PC-3 (cell line): ENCODE measurements at regions of chr1 and their contacts with region 1.

Region 1: DNA sequence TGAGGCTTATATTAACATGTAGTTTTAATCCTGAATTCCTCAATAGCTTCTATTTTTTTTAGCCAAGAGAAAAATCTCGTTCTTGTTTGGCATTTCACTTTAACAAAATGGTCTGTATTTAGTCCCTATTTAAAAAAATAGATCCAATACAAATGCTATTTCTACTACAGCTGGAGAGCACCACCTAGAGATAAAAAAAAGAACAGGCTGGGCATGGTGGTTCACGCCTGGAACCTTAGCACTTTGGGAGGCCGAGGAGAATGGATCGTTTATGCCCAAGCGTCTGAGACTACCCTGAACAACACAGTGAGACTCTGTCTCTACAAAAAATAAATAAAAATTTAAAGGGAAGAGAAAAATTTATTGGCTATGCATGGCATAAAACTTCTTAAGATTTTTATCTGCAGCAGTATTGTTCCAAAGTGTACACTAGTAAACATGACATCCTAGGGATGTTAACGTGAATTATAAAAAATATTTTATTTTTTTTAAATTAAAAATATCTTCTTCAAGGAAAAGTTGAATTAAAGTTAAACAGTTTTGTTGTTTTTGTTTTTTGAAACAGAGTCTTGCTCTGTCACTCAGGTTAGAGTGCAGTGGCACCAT is 4.4 kb downstream of the ST7L start:
- DNase-seq: peak; percentile 63
- ATAC-seq: 0 out of 2 replicates have a peak, but pooled peaks have one; percentile 14
- H3K4me3 ChIP-seq: no peak overlapping the region
- H3K27ac ChIP-seq: no peak overlapping the region
- H3K4me1 ChIP-seq: peaks cover 15% of the 10 kb centered on the region; the same call in 1 of the 2 replicates
- H3K27me3 ChIP-seq: no peaks in the 10 kb centered on the region
- CTCF ChIP-seq: peak; percentile 76

Region 2: GRCh38 chr1:112298558-112298957 is 316.0 kb before region 1 on chr1:
- CTCF ChIA-PET with region 1: no interaction called
- POLR2A ChIA-PET with region 1: no interaction called
- intact Hi-C with region 1: no loop called
- DNase-seq: peak; percentile 73
- ATAC-seq: peak; percentile 77
- H3K4me3 ChIP-seq: no peak overlapping the region
- H3K27ac ChIP-seq: no peak overlapping the region
- H3K4me1 ChIP-seq: no peaks in the 10 kb centered on the region
- H3K27me3 ChIP-seq: peaks cover 43% of the 10 kb centered on the region
- CTCF ChIP-seq: peak; percentile 81

Region 3: GRCh38 chr1:112395821-112396652 is 218.5 kb before region 1 on chr1 and contains the start of gene CTTNBP2NL:
- CTCF ChIA-PET with region 1: interaction called, 5 read pairs
- POLR2A ChIA-PET with region 1: interaction called, 22 read pairs
- intact Hi-C with region 1: loop called (anchors 1 kb)
- DNase-seq: peak; percentile 96
- ATAC-seq: peak; percentile 83
- H3K4me3 ChIP-seq: peak within 1 kb of the TSS; percentile 92
- H3K27ac ChIP-seq: peak within 1 kb of the TSS; percentile 98
- H3K4me1 ChIP-seq: peaks cover 44% of the 10 kb centered on the region
- H3K27me3 ChIP-seq: no peaks in the 10 kb centered on the region
- CTCF ChIP-seq: no peak
- total RNA-seq, gene CTTNBP2NL: 3.7 and 9.8 TPM in 2 replicates

Region 4: DNA sequence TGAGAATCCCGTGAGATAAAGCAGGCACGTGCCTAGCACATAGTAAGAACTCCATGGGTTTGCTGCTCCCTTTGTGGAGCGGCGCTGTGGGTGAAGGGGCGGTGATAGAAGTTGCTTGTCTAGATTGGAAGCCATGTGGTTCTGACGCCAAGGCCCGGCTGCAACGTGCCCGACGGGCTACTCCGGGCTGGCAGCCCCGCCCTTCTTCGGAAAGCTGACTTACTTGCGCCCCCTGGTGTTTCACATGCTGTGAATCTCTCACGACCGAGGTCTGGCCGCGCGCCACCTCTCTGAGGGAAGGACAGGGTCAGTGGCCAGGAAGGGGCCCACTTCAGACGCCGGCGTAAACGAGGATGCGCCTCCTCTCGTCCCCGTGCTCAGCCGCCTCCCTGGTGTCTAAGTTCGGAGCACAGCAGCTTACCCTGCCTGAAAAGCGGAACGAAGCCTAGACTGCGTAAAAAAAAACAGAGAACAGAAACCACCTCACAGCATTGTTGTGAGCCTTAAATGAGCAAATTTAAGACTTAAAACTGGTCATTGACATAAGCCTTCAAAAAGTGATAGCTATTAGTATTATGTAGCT is 148.4 kb before region 1 on chr1:
- CTCF ChIA-PET with region 1: no interaction called
- POLR2A ChIA-PET with region 1: no interaction called
- intact Hi-C with region 1: loop called (anchors 1 kb)
- DNase-seq: peak; percentile 94
- ATAC-seq: peak; percentile 87
- H3K4me3 ChIP-seq: peak overlapping the region; percentile 62
- H3K27ac ChIP-seq: peak overlapping the region; percentile 18
- H3K4me1 ChIP-seq: peaks cover 21% of the 10 kb centered on the region
- H3K27me3 ChIP-seq: no peaks in the 10 kb centered on the region
- CTCF ChIP-seq: peak; percentile 88

Region 5: GRCh38 chr1:112501810-112502641 is 112.5 kb before region 1 on chr1:
- CTCF ChIA-PET with region 1: interaction called, 5 read pairs
- POLR2A ChIA-PET with region 1: interaction called, 3 read pairs
- intact Hi-C with region 1: loop called (anchors 1 kb)
- DNase-seq: peak; percentile 64
- ATAC-seq: peak; percentile 85
- H3K4me3 ChIP-seq: peak overlapping the region; percentile 73
- H3K27ac ChIP-seq: no peak overlapping the region
- H3K4me1 ChIP-seq: no peaks in the 10 kb centered on the region; the same call in 1 of the 2 replicates
- H3K27me3 ChIP-seq: no peaks in the 10 kb centered on the region
- CTCF ChIP-seq: peak; percentile 74

Region 6: DNA sequence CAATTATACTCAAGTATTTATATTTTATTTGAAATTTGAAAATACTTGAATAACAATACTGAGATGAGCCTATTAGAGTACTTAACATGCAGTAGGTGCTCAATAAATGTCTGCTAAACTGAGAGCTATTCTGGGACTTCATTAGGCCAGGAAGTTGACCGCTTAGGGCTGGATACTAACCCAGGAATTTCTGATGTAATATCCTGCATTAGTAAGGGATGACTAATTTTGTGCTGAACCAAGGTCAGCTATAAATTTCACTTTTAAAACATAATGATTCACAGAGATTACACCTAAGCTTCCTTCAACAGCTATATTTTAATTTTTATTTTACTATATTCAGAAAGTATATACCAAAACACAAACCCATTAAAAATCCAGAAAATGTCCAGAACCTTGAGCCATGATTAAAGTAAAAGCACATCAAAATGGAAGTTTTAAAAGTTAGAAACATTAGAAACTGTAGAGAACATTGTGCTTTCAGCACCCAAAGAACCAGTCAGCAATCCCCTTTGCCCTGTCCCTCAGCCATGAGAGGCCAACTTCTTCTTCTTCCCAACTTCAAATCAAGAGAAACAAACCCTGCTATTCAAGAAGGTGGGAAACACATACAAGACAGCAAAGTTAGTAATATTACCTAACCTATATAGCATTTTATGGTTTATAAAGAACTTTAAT is 70.4 kb before region 1 on chr1:
- CTCF ChIA-PET with region 1: no interaction called
- POLR2A ChIA-PET with region 1: no interaction called
- intact Hi-C with region 1: loop called (anchors 2 kb)
- DNase-seq: peak; percentile 91
- ATAC-seq: peak; percentile 91
- H3K4me3 ChIP-seq: peak overlapping the region; percentile 28; the same call in 1 of the 2 replicates
- H3K27ac ChIP-seq: peak overlapping the region; percentile 76
- H3K4me1 ChIP-seq: peaks cover 20% of the 10 kb centered on the region
- H3K27me3 ChIP-seq: no peaks in the 10 kb centered on the region
- CTCF ChIP-seq: no peak

Region 7: GRCh38 chr1:112599476-112599875 is 15.1 kb before region 1 on chr1:
- CTCF ChIA-PET with region 1: no interaction called
- POLR2A ChIA-PET with region 1: no interaction called
- intact Hi-C with region 1: no loop called
- DNase-seq: no peak
- ATAC-seq: no peak
- H3K4me3 ChIP-seq: no peak overlapping the region
- H3K27ac ChIP-seq: no peak overlapping the region
- H3K4me1 ChIP-seq: no peaks in the 10 kb centered on the region
- H3K27me3 ChIP-seq: no peaks in the 10 kb centered on the region
- CTCF ChIP-seq: no peak